ENCODE measurements at regions of chr19 and their contacts with region 1.

Region 1: DNA sequence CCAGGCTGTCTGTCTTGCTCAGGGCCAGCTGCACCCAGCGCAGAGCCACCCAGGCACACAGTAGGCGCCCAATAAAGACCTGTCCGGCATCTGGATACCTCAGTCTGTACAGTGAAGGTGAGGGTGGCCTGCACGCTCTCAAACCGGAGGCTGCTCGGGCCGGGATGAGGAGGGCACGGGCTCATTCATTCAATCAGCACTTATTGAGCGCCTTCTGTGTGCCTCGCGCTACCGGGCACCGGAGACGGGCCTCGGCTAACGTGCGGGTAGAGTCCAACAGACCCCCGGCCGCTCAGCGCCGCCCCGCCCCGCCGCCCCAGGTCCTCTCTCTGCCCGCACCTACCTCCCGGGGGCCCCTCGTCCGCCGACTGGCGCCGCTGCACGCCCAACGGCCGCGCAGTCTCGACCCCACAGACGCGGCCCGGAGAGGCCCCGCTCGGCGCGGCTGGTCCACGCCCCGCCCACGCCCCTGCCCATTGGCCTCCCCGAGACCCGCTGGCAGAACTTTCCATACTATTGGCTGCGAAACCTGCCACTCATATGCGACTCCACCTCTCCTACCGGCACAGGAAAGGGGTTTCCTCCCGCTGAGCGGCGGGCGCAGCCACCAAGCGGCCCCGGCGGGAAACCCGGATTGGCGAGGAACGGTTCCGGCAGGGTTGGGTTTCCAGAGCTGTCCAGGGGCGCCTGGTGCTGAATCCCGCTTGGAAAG is at the start of gene SLC39A3:
- DNase-seq: peak; percentile 96 to 99 (median 98)
- H3K4me3 ChIP-seq: peak within 1 kb of the TSS; percentile 63 to 100 (median 95)
- H3K27ac ChIP-seq: peak within 1 kb of the TSS in 49 of 59 donors; percentile 1 to 84 (median 62)
- H3K27me3 ChIP-seq: no peaks in the 10 kb centered on the region
- CTCF ChIP-seq: peak in 48 of 56 donors; percentile 9 to 66 (median 43)
- total RNA-seq, gene SLC39A3: 22.3 to 60.9 (median 39.3) TPM

Region 2: GRCh38 chr19:2691951-2692350 is 47.8 kb before region 1 on chr19:
- intact Hi-C with region 1: loop called in 1 of 2 experiments (anchors 10 kb)
- DNase-seq: peak in 9 of 10 donors; percentile 77 to 94 (median 88)
- H3K4me3 ChIP-seq: peak overlapping the region in 1 of 59 donors; percentile 5
- H3K27ac ChIP-seq: peak overlapping the region in 58 of 59 donors; percentile 64 to 100 (median 97)
- H3K27me3 ChIP-seq: no peaks in the 10 kb centered on the region
- CTCF ChIP-seq: peak in 6 of 56 donors; percentile 12 to 32 (median 24)

Region 3: DNA sequence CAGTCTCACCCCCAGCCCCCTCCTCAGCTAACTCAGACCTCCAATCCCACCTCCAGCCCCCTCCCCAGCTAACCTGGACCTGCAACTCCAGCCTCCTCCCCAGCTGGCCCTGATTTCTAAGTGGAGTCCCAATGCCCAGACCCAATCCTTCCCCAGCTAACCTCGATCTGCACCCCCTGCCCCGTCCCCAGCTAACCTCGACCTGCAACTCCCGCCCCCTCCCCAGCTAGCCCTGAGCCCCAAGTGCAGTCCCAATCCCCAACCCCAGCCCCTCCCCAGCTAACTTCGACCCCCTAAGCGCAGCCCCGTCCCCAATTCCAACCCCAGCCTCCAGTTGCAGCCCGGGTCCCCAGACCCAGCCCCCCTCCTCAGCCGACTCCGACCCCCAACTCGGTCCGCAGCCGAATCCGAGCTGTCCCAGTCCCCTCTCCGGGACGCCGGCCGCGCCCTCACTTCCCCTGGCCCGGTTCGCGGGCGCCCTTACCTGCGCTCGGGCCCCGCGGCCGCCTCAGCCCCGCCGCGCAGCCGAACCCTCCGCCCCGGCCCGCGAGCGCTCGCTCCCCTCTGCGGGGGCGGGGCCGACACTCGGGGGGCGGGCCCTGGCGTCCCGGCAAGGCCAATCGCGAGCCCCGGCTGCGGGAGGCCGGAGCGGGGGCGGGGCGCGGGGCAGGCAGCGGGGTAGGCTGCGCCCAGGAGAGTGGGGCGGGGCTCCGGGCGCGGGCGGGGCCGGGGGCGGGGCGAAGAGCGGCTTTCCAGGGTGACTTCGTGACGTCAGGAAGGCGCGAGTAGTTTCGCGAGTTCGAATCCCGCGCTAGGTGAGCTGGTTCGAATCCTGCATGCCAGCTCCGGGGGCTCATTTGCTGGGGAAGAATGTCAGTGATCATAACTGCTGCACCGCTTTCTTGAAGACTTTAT is 37.3 kb before region 1 on chr19 and contains the start of gene GNG7:
- intact Hi-C with region 1: loop called (anchors 5 to 10 kb)
- DNase-seq: peak; percentile 86 to 99 (median 94)
- H3K4me3 ChIP-seq: peak within 1 kb of the TSS; percentile 15 to 76 (median 63)
- H3K27ac ChIP-seq: peak within 1 kb of the TSS in 45 of 59 donors; percentile 18 to 99 (median 70)
- H3K27me3 ChIP-seq: no peaks in the 10 kb centered on the region
- CTCF ChIP-seq: peak in 3 of 56 donors; percentile 7 to 23 (median 19)
- total RNA-seq, gene GNG7: 71.9 to 184 (median 98.1) TPM

Region 4: GRCh38 chr19:2722541-2723344 is 17.0 kb before region 1 on chr19:
- intact Hi-C with region 1: no loop called
- DNase-seq: peak in 9 of 10 donors; percentile 48 to 90 (median 76)
- H3K4me3 ChIP-seq: peak overlapping the region in 26 of 59 donors; percentile 1 to 71 (median 30)
- H3K27ac ChIP-seq: peak overlapping the region in 54 of 59 donors; percentile 1 to 88 (median 76)
- H3K27me3 ChIP-seq: peaks cover 0 to 11% (median 0%) of the 10 kb centered on the region in 45 donors
- CTCF ChIP-seq: no peak